RWPE1 (cell line): ENCODE measurements at regions of chr2 and their contacts with region 1.

Region 1: GRCh38 chr2:201860636-201861066 is 54.3 kb downstream of the CDK15 start:
- DNase-seq: peak; percentile 68
- H3K27ac ChIP-seq: no peak overlapping the region
- CTCF ChIP-seq: peak; percentile 83

Region 2: GRCh38 chr2:202178342-202178958 is 317.8 kb after region 1 on chr2:
- CTCF ChIA-PET with region 1: interaction called, 10 read pairs
- POLR2A ChIA-PET with region 1: no interaction called
- DNase-seq: peak; percentile 61
- H3K27ac ChIP-seq: no peak overlapping the region
- CTCF ChIP-seq: peak; percentile 80